HCT116 (cell line): ENCODE measurements at regions of chr11 and their contacts with region 1.

Region 1: DNA sequence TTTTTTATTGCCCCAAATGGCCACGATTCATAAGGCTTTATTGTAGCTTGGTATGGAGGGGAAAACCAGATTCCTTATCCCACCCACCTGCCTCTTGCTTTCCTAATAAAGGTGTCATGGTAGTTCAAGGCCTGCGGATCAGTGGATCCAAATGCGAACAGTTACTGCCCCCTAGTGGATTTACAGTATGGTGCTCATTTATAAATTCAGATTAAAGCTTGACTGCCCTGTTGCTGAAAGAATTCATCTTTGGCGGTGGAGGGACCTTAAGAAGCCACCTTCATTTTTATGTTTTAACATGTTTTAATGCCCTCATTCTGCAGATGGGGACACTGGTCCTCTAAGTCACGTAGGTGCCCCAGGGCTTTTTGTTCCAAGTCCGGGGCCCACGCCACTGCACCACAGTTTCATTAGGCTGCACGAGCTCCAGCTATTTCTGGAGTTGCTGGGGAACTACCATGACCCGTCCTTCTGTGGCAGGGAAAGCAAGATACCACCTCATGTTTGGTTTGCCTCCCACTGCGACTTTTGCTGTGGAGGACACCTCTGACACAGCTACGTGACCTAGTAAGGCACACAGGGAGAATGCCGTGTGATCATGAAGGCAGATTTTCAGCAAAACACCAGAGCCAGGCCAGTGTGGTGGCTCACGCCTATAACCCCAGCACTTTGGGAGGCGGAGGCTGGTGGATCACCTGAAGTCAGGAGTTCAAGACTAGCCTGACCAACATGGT is 15.6 kb upstream of the INCENP start:
- DNase-seq: peak; percentile 59
- ATAC-seq: peak; percentile 84
- H3K4me3 ChIP-seq: no peak overlapping the region
- H3K27ac ChIP-seq: no peak overlapping the region
- H3K4me1 ChIP-seq: no peaks in the 10 kb centered on the region; a peak in 1 of 4 replicates
- H3K27me3 ChIP-seq: no peaks in the 10 kb centered on the region
- CTCF ChIP-seq: peak; percentile 68 to 92 (median 88)
- POLR2A ChIP-seq: no peak
- RAD21 ChIP-seq: peak; percentile 95

Region 2: DNA sequence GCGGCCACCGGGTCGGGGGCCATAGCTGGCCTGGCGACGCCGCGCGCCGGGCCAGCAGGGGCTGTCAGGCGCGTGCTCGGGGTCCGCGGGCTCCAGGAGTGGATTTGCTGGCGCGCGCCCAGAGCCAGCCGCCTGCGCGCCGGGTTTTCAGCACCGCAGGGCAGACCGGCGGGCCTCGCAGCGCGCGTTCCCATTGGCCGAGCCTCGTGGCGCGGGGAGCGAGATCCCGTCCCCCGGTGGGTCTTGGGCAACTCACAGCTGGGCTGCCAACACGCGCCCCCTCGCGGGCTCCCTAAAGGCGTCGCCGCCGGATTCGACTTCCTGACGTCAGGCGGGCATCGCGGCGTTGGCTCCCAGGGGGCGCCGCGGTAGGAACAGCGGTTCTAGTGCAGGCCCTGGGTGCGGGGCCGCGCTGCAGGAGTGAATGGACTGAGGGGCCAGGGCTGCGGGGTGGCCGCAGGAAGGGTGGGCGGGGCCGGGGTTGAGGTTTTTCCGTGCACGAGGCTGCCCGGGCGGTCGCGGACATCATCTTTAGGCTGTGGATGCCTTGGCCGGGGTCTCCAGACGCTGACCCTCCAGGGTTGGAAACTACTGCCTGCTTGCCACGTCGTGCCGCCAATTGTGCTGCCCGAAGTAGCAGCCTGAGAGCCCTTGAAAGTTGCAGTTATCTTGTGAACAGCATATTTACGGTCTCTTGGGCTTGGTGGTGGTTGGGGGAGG is 291.3 kb before region 1 on chr11 and contains the start of gene FADS1:
- CTCF ChIA-PET with region 1: interaction called, 17 read pairs
- POLR2A ChIA-PET with region 1: interaction called, 6 read pairs
- RAD21 ChIA-PET with region 1: interaction called in 1 of 2 experiments, 3 read pairs
- intact Hi-C with region 1: no loop called
- DNase-seq: peak; percentile 91
- ATAC-seq: peak; percentile 57
- H3K4me3 ChIP-seq: peak within 1 kb of the TSS; percentile 85 to 89
- H3K27ac ChIP-seq: peak within 1 kb of the TSS; percentile 96
- H3K4me1 ChIP-seq: peaks cover 32 to 57% of the 10 kb centered on the region in 2 experiments
- H3K27me3 ChIP-seq: no peaks in the 10 kb centered on the region
- CTCF ChIP-seq: peak in 2 of 3 experiments; percentile 41 to 64; a peak in 3 of 6 replicates
- POLR2A ChIP-seq: peak; percentile 68
- RAD21 ChIP-seq: no peak
- total RNA-seq, gene FADS1: 56.6 TPM

Region 3: DNA sequence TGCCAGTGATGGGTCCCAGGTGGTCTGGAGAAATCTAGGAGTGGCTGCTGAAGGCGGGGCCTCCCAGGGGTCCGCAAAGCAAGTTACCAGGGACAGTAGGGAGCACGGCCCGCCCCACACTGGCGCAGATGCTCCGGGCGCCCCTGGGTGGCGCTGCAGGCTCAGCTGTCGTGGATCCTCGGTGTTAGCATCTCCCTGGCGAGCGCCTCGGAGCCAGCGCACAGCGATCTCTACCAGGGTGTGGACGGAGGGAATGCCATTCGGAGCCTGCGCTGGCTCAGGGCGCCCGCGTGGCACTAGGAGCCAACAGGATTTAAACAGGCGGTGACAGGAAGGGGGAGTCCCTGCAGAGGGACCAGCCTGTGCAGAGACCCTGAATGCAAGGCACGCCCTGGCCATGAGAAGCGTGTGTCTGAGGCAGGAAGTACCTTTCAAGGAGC is 237.0 kb before region 1 on chr11:
- CTCF ChIA-PET with region 1: interaction called, 46 read pairs
- POLR2A ChIA-PET with region 1: interaction called, 3 read pairs
- RAD21 ChIA-PET with region 1: interaction called in 1 of 2 experiments, 4 read pairs
- intact Hi-C with region 1: loop called (anchors 1 kb)
- DNase-seq: peak; percentile 43
- ATAC-seq: peak; percentile 99
- H3K4me3 ChIP-seq: peak overlapping the region; percentile 6 to 47; a peak in 3 of 4 replicates
- H3K27ac ChIP-seq: no peak overlapping the region
- H3K4me1 ChIP-seq: peaks cover 9 to 20% of the 10 kb centered on the region in 2 experiments
- H3K27me3 ChIP-seq: no peaks in the 10 kb centered on the region
- CTCF ChIP-seq: peak; percentile 86 to 96 (median 94)
- POLR2A ChIP-seq: no peak
- RAD21 ChIP-seq: peak; percentile 99

Region 4: GRCh38 chr11:62054484-62055121 is 53.6 kb before region 1 on chr11:
- CTCF ChIA-PET with region 1: interaction called, 3 read pairs
- POLR2A ChIA-PET with region 1: no interaction called
- RAD21 ChIA-PET with region 1: no interaction called
- intact Hi-C with region 1: loop called (anchors 5 kb)
- DNase-seq: peak; percentile 87
- ATAC-seq: peak; percentile 98
- H3K4me3 ChIP-seq: no peak overlapping the region
- H3K27ac ChIP-seq: no peak overlapping the region
- H3K4me1 ChIP-seq: peaks cover 13 to 19% of the 10 kb centered on the region in 2 experiments; a peak in 3 of 4 replicates
- H3K27me3 ChIP-seq: no peaks in the 10 kb centered on the region
- CTCF ChIP-seq: peak; percentile 79 to 95 (median 80)
- POLR2A ChIP-seq: no peak
- RAD21 ChIP-seq: peak; percentile 99

Region 5: DNA sequence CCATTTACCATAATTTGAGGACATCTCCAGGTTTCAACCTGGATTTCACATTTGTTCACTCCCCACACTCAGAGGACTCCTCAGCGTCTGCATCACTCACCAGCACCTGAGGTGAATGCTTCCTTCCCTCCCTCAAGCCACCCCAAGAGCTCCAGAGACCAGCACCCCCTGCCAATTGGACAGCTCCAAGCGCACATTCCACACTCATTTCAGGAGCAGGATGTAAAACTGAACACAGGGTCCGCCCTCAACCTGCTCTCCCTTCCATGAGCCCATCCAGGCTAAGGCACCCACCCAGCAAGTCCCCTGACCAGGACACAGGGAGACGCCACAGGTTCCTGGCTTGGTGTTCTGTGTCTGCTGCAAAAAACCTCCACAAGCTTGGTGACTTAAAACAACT is 85.8 kb after region 1 on chr11:
- CTCF ChIA-PET with region 1: no interaction called
- POLR2A ChIA-PET with region 1: no interaction called
- RAD21 ChIA-PET with region 1: no interaction called
- intact Hi-C with region 1: no loop called
- DNase-seq: no peak
- ATAC-seq: no peak
- H3K4me3 ChIP-seq: no peak overlapping the region
- H3K27ac ChIP-seq: no peak overlapping the region
- H3K4me1 ChIP-seq: no peaks in the 10 kb centered on the region
- H3K27me3 ChIP-seq: peaks cover 55% of the 10 kb centered on the region
- CTCF ChIP-seq: no peak
- POLR2A ChIP-seq: no peak
- RAD21 ChIP-seq: no peak